ENCODE measurements at regions of chr1 and their contacts with region 1.

Region 1: GRCh38 chr1:39196244-39197215 is 8.0 kb upstream of the MACF1 start:
- DNase-seq: no peak
- ATAC-seq: peak; percentile 77
- H3K4me3 ChIP-seq: peak overlapping the region; percentile 26
- H3K27ac ChIP-seq: peak overlapping the region; percentile 53
- H3K4me1 ChIP-seq: peaks cover 54% of the 10 kb centered on the region
- H3K27me3 ChIP-seq: no peaks in the 10 kb centered on the region
- CTCF ChIP-seq: no peak
- EP300 ChIP-seq: peak in 1 of 2 experiments; percentile 60; a peak in 1 of 4 replicates
- POLR2A ChIP-seq: no peak
- RAD21 ChIP-seq: no peak

Region 2: GRCh38 chr1:39105061-39105840 is 91.3 kb before region 1 on chr1:
- CTCF ChIA-PET with region 1: interaction called, 465 read pairs
- POLR2A ChIA-PET with region 1: interaction called, 16 read pairs
- RAD21 ChIA-PET with region 1: interaction called, 304 read pairs
- SMC1A ChIA-PET with region 1: interaction called, 164 read pairs
- in situ Hi-C with region 1: no loop called
- intact Hi-C with region 1: loop called (anchors 1 kb)
- DNase-seq: no peak
- ATAC-seq: peak; percentile 51
- H3K4me3 ChIP-seq: peak overlapping the region; percentile 94
- H3K27ac ChIP-seq: peak overlapping the region; percentile 67
- H3K4me1 ChIP-seq: peaks cover 40% of the 10 kb centered on the region
- H3K27me3 ChIP-seq: no peaks in the 10 kb centered on the region
- CTCF ChIP-seq: no peak
- EP300 ChIP-seq: no peak
- POLR2A ChIP-seq: peak; percentile 75
- RAD21 ChIP-seq: no peak

Region 3: DNA sequence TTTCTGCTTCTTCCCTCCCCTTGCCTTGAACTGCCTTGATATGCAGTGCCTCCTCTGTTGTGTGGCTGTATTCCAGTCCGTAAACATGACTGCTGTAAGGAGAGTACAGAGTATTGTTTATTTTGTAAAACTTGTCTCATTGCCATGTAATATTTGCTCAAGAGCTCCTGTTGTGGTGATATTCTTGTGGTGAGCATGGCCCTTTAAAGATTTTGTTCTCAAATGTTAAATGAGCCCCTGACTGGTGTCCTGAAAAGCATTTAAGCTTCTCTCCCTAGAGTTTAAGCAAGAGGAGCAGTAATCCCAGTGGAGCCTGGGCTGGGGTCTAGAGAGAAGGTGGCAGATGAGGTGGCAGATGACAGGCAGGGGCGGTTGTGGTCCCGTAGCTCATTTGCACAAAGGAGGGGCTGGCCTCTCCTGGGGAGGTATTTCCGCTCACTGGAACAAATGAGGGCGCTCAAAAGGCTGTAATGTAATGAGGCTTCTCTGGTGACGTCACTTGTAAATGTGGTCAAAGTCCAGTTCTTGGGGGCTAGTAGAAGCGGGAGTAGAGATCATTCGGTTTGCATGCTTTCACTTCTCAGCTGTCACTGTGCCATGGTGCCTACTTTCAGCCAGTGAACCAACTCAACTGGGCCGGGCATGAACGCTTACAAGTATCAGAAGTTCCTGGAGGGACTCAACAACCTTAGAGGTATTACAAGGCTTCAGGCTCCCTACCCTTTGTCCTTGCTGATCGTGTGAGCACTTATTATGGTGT is 38.0 kb before region 1 on chr1:
- CTCF ChIA-PET with region 1: interaction called, 48 read pairs
- POLR2A ChIA-PET with region 1: interaction called, 3 read pairs
- RAD21 ChIA-PET with region 1: interaction called, 27 read pairs
- SMC1A ChIA-PET with region 1: interaction called, 47 read pairs
- in situ Hi-C with region 1: no loop called
- intact Hi-C with region 1: no loop called
- DNase-seq: peak; percentile 37
- ATAC-seq: peak; percentile 88
- H3K4me3 ChIP-seq: no peak overlapping the region
- H3K27ac ChIP-seq: no peak overlapping the region
- H3K4me1 ChIP-seq: peaks cover 2% of the 10 kb centered on the region; the same call in 1 of the 2 replicates
- H3K27me3 ChIP-seq: no peaks in the 10 kb centered on the region
- CTCF ChIP-seq: no peak
- EP300 ChIP-seq: no peak
- POLR2A ChIP-seq: no peak
- RAD21 ChIP-seq: no peak

Region 4: DNA sequence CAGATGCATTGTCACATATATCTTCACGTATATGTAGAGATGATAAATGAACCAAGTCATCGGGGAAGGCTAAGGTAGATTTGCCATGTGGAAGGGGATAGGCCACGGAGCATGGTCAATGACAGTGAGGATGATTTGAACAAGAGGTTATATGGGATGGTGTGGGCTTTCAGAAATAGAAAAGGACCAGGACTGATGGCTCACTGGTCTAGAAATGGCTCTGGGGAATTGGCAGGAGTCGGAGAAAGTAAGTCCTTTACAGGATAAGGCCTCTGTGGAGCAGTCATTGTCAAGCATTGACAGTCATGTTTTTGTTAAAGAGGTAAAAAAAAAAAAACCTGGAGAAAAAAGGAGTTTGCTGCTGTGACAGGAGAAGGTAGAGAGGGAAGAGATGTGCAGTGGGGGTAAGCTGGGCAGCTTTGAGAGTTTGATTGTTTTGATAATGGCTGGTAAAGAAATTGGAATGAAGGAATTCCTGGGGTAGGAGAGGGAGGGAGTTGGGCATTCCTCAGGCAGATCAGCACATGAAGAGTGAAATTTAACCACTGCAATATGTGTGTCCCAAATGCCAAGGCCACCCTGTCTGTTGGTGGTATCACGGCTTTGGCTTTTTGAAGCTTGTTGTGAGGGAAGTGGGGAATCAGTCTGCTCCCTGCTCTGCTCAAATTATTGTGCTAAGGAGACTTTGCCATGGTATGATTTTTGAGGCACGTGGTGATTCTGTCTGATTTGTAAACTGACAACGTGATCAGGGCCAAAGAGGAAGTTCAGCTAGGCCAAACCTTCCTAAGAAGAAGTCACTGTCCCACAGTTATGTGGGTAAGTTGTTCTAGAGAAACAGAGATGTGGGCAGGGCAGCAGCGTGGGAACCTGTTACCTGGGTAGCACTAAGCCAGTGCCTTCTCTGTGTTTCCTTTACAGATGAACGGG is 34.0 kb after region 1 on chr1:
- CTCF ChIA-PET with region 1: interaction called, 48 read pairs
- POLR2A ChIA-PET with region 1: no interaction called
- RAD21 ChIA-PET with region 1: interaction called, 14 read pairs
- SMC1A ChIA-PET with region 1: interaction called, 41 read pairs
- in situ Hi-C with region 1: no loop called
- intact Hi-C with region 1: no loop called
- DNase-seq: peak; percentile 57
- ATAC-seq: peak; percentile 85
- H3K4me3 ChIP-seq: no peak overlapping the region
- H3K27ac ChIP-seq: no peak overlapping the region
- H3K4me1 ChIP-seq: peaks cover 10% of the 10 kb centered on the region
- H3K27me3 ChIP-seq: no peaks in the 10 kb centered on the region
- CTCF ChIP-seq: no peak
- EP300 ChIP-seq: no peak
- POLR2A ChIP-seq: no peak
- RAD21 ChIP-seq: no peak

Region 5: DNA sequence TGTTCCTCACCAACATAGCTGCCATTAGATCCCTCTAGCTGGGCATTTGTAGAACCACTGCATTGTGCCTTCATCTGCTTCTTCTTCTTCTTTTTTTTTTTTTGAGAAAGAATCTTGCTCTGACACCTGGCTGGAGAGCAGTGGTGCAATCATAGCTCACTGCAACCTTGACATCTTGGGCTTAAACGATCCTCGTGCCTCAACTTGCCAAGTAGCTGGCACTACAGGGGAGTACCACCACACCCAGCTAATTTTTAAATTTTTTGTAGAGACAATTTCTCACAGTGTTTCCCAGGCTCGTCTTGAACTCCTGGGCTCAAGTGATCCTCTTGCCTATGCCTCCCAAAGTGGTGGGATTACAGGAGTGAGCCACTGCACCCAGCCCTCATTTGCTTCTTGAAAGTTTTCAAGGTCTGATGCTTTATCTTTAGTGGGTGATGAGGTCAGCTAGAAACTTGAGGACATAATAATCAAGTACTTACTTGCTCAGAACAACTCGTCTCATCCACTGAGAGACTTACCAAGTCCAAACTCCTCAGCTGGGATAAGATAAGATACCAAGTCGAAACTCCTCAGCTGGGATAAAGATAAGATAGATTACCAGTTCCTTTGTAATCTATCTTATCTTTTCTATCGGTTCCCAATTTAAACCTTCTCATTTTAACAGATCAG is 79.4 kb after region 1 on chr1:
- CTCF ChIA-PET with region 1: interaction called, 918 read pairs
- POLR2A ChIA-PET with region 1: interaction called, 3 read pairs
- RAD21 ChIA-PET with region 1: interaction called, 117 read pairs
- SMC1A ChIA-PET with region 1: interaction called, 155 read pairs
- in situ Hi-C with region 1: no loop called
- intact Hi-C with region 1: no loop called
- DNase-seq: no peak
- ATAC-seq: no peak
- H3K4me3 ChIP-seq: no peak overlapping the region
- H3K27ac ChIP-seq: no peak overlapping the region
- H3K4me1 ChIP-seq: peaks cover 21% of the 10 kb centered on the region
- H3K27me3 ChIP-seq: no peaks in the 10 kb centered on the region
- CTCF ChIP-seq: no peak
- EP300 ChIP-seq: no peak
- POLR2A ChIP-seq: no peak
- RAD21 ChIP-seq: no peak

Region 6: GRCh38 chr1:39378377-39378776 is 181.8 kb after region 1 on chr1:
- CTCF ChIA-PET with region 1: interaction called, 15 read pairs
- POLR2A ChIA-PET with region 1: no interaction called
- RAD21 ChIA-PET with region 1: interaction called, 8 read pairs
- SMC1A ChIA-PET with region 1: interaction called, 10 read pairs
- in situ Hi-C with region 1: no loop called
- intact Hi-C with region 1: no loop called
- DNase-seq: no peak
- ATAC-seq: peak; percentile 51; the same call in 2 of the 3 replicates
- H3K4me3 ChIP-seq: no peak overlapping the region
- H3K27ac ChIP-seq: no peak overlapping the region
- H3K4me1 ChIP-seq: no peaks in the 10 kb centered on the region
- H3K27me3 ChIP-seq: no peaks in the 10 kb centered on the region
- CTCF ChIP-seq: peak; percentile 32 to 42 (median 40); a peak in 5 of 6 replicates
- EP300 ChIP-seq: no peak
- POLR2A ChIP-seq: no peak
- RAD21 ChIP-seq: no peak

Measured in GM12878 (cell line).